ENCODE measurements at regions of chr7 and their contacts with region 1.

Region 1: DNA sequence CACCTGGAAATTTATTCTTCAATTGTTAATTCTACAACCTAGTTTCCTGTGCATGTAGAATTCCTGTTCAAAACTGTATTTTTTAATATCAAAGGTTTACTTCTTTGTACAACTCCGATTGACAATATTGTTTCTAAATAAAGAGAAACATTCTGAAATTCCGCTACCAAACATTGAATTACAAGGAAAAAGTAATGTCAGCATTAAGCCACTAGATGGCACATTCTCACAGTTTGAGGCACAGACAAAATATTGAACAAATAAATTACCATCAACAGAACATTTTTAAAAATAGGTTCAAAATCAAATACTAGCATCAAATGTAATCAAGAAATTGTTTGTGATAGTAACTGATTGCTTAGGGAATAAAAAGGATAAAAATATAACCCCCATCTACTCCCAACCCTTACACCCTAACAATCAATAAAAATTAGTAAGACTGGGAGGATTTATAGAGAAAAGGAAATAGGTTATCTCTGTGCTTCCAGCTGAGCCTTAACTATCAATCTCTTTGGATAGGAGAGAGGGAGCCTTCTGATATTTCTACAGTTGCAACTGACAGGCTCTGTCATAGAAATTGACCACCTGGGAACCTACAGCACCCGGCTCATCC is 86.6 kb upstream of the C7orf33 start:
- DNase-seq: no peak
- H3K4me3 Mint-ChIP-seq: no peak overlapping the region
- H3K27ac Mint-ChIP-seq: no peak overlapping the region
- H3K4me1 Mint-ChIP-seq: peaks cover 29% of the 10 kb centered on the region
- H3K27me3 Mint-ChIP-seq: peaks cover 28% of the 10 kb centered on the region

Region 2: GRCh38 chr7:148412691-148413090 is 91.3 kb before region 1 on chr7:
- CTCF ChIA-PET with region 1: no interaction called
- POLR2A ChIA-PET with region 1: no interaction called
- intact Hi-C with region 1: no loop called
- DNase-seq: no peak
- H3K4me3 Mint-ChIP-seq: no peak overlapping the region
- H3K27ac Mint-ChIP-seq: no peak overlapping the region
- H3K4me1 Mint-ChIP-seq: no peaks in the 10 kb centered on the region
- H3K27me3 Mint-ChIP-seq: peaks cover 10% of the 10 kb centered on the region

Region 3: DNA sequence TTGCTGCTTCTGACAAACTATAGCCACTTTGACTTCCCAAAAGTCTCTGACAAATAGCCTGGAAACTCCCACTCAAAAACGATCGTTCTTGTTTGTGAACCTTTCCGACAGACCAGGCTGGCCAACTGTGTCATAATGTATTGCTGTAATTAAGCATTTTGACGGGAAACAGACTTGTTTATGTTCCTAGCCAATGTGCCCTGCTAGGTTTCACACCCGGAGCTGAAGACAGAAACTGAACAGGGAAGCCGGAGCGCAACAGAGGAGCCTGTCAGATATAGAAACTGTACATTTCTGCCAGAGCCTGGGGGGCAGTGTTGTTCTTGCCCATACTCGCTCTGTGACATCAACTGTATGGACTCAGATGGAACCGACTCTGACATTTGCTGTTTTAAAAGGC is 31.2 kb after region 1 on chr7:
- CTCF ChIA-PET with region 1: no interaction called
- POLR2A ChIA-PET with region 1: no interaction called
- intact Hi-C with region 1: loop called (anchors 1 kb)
- DNase-seq: peak; percentile 65
- H3K4me3 Mint-ChIP-seq: peak overlapping the region; percentile 61
- H3K27ac Mint-ChIP-seq: peak overlapping the region; percentile 65
- H3K4me1 Mint-ChIP-seq: peaks cover 7% of the 10 kb centered on the region
- H3K27me3 Mint-ChIP-seq: peaks cover 23% of the 10 kb centered on the region

Region 4: DNA sequence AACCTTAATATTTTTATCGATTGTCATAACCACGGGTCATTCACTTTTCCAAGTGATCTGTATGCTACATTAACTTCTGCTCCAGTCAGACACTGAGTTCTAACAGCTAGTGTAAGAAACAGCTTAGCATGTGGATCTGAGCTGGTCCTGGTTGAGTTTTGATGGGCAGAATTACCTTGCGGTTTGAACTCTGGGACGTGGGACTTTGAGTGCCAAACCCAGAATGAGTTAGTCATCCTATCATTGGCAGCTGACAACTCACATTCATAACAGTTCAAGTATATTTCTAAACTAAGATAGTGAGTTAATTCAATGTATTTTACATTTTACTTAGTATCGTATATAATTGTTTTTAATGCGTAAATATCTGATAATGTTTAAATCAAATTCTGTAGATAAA is 129.8 kb after region 1 on chr7:
- CTCF ChIA-PET with region 1: no interaction called
- POLR2A ChIA-PET with region 1: no interaction called
- intact Hi-C with region 1: loop called (anchors 1 kb)
- DNase-seq: peak; percentile 49
- H3K4me3 Mint-ChIP-seq: no peak overlapping the region
- H3K27ac Mint-ChIP-seq: peak overlapping the region; percentile 5
- H3K4me1 Mint-ChIP-seq: peaks cover 22% of the 10 kb centered on the region
- H3K27me3 Mint-ChIP-seq: peaks cover 3% of the 10 kb centered on the region

Region 5: DNA sequence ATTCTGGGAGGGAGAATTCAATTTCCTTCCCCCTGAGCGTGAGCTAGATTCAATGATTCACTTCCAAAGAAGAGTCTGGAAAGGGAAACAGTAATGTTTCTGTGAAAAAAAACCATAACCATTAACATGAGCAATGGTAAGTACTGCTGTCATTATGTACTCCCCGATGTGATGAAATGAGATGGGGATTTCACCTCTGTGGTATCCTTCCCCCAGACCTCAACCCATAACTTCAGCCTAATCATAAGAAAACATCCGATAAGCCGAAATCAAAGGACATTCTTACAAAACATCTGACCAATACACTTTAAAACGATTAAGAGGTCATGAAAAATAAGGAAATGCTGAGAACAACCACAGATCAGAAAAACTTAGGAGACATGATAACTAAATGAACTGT is 352.9 kb after region 1 on chr7:
- CTCF ChIA-PET with region 1: interaction called, 5 read pairs
- POLR2A ChIA-PET with region 1: no interaction called
- intact Hi-C with region 1: loop called (anchors 1 kb)
- DNase-seq: peak; percentile 50
- H3K4me3 Mint-ChIP-seq: peak overlapping the region; percentile 40
- H3K27ac Mint-ChIP-seq: peak overlapping the region; percentile 82
- H3K4me1 Mint-ChIP-seq: peaks cover 39% of the 10 kb centered on the region
- H3K27me3 Mint-ChIP-seq: no peaks in the 10 kb centered on the region

Region 6: DNA sequence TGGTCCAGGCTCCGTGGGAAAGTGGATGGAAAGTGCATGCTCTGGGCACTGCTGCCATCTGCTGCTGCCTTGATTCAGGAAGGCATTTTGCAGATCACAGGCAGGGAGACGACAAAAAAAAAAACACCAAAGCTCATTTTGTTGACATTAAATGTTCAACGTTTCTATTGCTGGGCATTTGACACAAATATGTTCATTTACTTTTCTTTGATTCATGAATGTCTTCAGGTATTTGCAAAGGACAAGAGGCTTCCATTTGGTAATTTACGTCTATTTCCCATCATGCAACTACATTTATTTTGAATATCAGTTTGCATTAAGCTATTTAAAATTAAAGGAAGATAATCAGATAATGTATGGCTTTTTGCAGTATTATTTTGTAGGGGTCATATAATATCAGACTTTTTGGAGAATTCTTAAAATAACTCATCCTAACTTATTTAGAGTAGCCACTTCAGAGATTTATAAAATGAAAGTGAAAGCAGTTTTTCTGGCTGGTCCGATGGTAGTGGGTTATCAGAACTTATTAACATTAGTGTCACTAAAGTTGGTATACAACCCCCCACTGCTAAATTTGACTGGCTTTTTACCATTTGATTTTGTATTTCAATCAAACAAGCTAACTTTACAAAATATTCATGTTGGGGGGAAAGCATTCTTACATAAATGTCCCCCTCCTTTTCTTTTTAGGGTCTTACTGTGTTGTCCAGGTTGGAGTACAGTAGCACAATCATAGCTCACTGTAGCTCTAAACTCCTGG is 459.0 kb after region 1 on chr7:
- CTCF ChIA-PET with region 1: interaction called, 8 read pairs
- POLR2A ChIA-PET with region 1: no interaction called
- intact Hi-C with region 1: loop called (anchors 1 kb)
- DNase-seq: peak; percentile 81
- H3K4me3 Mint-ChIP-seq: peak overlapping the region; percentile 92
- H3K27ac Mint-ChIP-seq: peak overlapping the region; percentile 87
- H3K4me1 Mint-ChIP-seq: peaks cover 23% of the 10 kb centered on the region
- H3K27me3 Mint-ChIP-seq: no peaks in the 10 kb centered on the region

Region 7: DNA sequence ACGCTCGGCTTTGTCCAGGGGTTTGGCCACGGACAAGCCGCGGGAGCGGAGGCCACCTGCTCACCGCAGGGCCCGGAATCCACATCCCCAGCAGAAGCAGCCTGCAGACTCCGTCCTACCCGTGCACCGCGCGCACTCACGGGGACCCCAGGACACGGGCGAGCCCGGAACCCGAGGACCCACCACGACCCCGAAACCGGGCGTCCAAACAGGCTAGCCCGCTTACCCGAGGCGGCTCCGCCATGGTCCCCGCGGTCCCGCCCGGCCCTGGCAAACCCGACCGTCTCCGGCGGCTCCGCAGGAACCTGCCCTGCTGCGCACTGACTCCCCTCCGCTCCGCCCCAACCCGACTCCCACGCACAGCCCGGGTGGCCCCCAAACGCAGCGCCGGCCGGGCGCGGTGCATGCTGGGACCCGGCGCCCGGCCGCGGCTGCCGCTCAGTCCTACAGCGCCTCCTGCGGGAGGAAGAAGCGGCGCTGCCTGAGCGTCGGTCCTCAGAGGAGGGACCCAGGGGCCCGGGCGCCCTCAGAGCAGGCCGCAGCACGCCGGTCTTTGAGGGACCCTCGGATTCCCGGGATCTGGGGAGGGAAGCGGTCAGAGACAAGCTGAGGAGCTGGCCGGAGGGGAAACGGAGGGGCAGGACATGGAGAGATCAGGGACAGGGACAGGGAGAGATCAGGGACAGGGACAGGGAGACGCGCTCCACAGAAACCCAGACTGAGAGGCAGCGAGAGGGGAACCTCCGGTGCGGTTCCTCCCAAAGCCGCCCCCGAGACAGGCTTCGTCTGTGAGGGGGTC is 586.6 kb after region 1 on chr7 and contains the start of gene ZNF786:
- CTCF ChIA-PET with region 1: no interaction called
- POLR2A ChIA-PET with region 1: no interaction called
- intact Hi-C with region 1: loop called (anchors 5 kb)
- DNase-seq: peak; percentile 96
- H3K4me3 Mint-ChIP-seq: peak within 1 kb of the TSS; percentile 96
- H3K27ac Mint-ChIP-seq: peak within 1 kb of the TSS; percentile 99
- H3K4me1 Mint-ChIP-seq: peaks cover 21% of the 10 kb centered on the region
- H3K27me3 Mint-ChIP-seq: no peaks in the 10 kb centered on the region
- total RNA-seq, gene ZNF786: 4.5 to 6.1 TPM

Measured in activated CD4-positive, alpha-beta memory T cell treated with anti-CD3 and anti-CD28 coated beads for 36 hours (primary cell).